Gastrocnemius medialis (tissue), 4 donors: ENCODE measurements at regions of chr6 and their contacts with region 1.

Region 1: GRCh38 chr6:159852877-159853276 is 37.9 kb upstream of the MAS1 start:
- DNase-seq: no peak
- ATAC-seq: no peak
- H3K4me3 ChIP-seq: no peak overlapping the region
- H3K27ac ChIP-seq: no peak overlapping the region
- H3K4me1 ChIP-seq: no peaks in the 10 kb centered on the region
- H3K27me3 ChIP-seq: no peaks in the 10 kb centered on the region
- CTCF ChIP-seq: no peak
- POLR2A ChIP-seq: no peak

Region 2: GRCh38 chr6:159989492-159990480 is 136.9 kb after region 1 on chr6:
- in situ Hi-C with region 1: no loop called
- intact Hi-C with region 1: no loop called
- DNase-seq: no peak
- ATAC-seq: no peak
- H3K4me3 ChIP-seq: peak overlapping the region in 1 of 4 donors; percentile 5
- H3K27ac ChIP-seq: peak overlapping the region; percentile 34 to 46 (median 40)
- H3K4me1 ChIP-seq: peaks cover 70 to 86% of the 10 kb centered on the region in 2 donors
- H3K27me3 ChIP-seq: no peaks in the 10 kb centered on the region
- CTCF ChIP-seq: no peak
- POLR2A ChIP-seq: no peak

Region 3: DNA sequence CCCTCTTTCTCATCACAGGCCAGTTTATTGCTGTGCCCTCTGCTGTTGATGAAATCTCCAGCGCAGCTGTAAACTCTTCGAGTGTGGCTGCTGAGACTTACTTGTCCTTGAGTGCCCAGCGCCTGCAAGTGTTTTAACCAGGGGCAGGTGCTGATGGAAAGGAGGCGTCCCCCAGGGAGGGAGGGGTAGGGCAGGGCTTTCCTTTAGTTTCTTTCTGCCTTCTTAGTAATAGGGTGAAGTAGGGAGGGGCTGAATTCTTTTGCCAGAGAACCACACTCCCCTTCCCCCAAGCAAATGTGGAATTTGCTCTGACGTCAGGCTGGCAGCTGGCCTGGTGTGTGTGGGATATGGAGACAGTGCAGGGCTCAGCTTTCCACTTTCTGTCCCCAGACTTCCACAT is 177.2 kb after region 1 on chr6:
- in situ Hi-C with region 1: loop called in 1 of 4 experiments (anchors 25 kb)
- intact Hi-C with region 1: no loop called
- DNase-seq: peak; percentile 77 to 89
- ATAC-seq: peak; percentile 88 to 93
- H3K4me3 ChIP-seq: no peak overlapping the region
- H3K27ac ChIP-seq: peak overlapping the region; percentile 80 to 83 (median 81)
- H3K4me1 ChIP-seq: peaks cover 34 to 42% of the 10 kb centered on the region in 2 donors
- H3K27me3 ChIP-seq: no peaks in the 10 kb centered on the region
- CTCF ChIP-seq: peak in 2 of 5 experiments; percentile 16 to 18
- POLR2A ChIP-seq: peak; percentile 4 to 36

Region 4: GRCh38 chr6:160088069-160088783 is 235.3 kb after region 1 on chr6:
- in situ Hi-C with region 1: loop called in 1 of 4 experiments (anchors 25 kb)
- intact Hi-C with region 1: no loop called
- DNase-seq: peak in 1 of 2 donors; percentile 65
- ATAC-seq: peak; percentile 66 to 84
- H3K4me3 ChIP-seq: no peak overlapping the region
- H3K27ac ChIP-seq: peak overlapping the region in 3 of 4 donors; percentile 25 to 58 (median 30)
- H3K4me1 ChIP-seq: no peaks in the 10 kb centered on the region
- H3K27me3 ChIP-seq: no peaks in the 10 kb centered on the region
- CTCF ChIP-seq: peak; percentile 48 to 59 (median 53)
- POLR2A ChIP-seq: no peak